Kidney (tissue), 22 donors: ENCODE measurements at regions of chr17 and their contacts with region 1.

Region 1: GRCh38 chr17:73247726-73248125 is 14.0 kb downstream of the CPSF4L start:
- DNase-seq: no peak
- H3K4me3 ChIP-seq: no peak overlapping the region
- H3K27ac ChIP-seq: no peak overlapping the region
- H3K4me1 ChIP-seq: no peaks in the 10 kb centered on the region
- H3K27me3 ChIP-seq: no peaks in the 10 kb centered on the region
- CTCF ChIP-seq: peak; percentile 7

Region 2: GRCh38 chr17:72725433-72726068 is 522.2 kb before region 1 on chr17:
- intact Hi-C with region 1: no loop called
- DNase-seq: peak in 4 of 5 donors; percentile 69 to 80 (median 76)
- H3K4me3 ChIP-seq: no peak overlapping the region
- H3K27ac ChIP-seq: no peak overlapping the region
- H3K4me1 ChIP-seq: no peaks in the 10 kb centered on the region
- H3K27me3 ChIP-seq: no peaks in the 10 kb centered on the region
- CTCF ChIP-seq: peak; percentile 90

Region 3: GRCh38 chr17:73192894-73193701 is 54.6 kb before region 1 on chr17 and contains the start of gene COG1:
- intact Hi-C with region 1: loop called (anchors 10 kb)
- DNase-seq: peak; percentile 88 to 97 (median 92)
- H3K4me3 ChIP-seq: peak within 1 kb of the TSS; percentile 76 to 84 (median 84)
- H3K27ac ChIP-seq: peak within 1 kb of the TSS; percentile 81 to 88
- H3K4me1 ChIP-seq: peaks cover 0 to 5% (median 4%) of the 10 kb centered on the region in 3 donors
- H3K27me3 ChIP-seq: no peaks in the 10 kb centered on the region
- CTCF ChIP-seq: no peak
- total RNA-seq, gene COG1: 41.6 TPM

Region 4: DNA sequence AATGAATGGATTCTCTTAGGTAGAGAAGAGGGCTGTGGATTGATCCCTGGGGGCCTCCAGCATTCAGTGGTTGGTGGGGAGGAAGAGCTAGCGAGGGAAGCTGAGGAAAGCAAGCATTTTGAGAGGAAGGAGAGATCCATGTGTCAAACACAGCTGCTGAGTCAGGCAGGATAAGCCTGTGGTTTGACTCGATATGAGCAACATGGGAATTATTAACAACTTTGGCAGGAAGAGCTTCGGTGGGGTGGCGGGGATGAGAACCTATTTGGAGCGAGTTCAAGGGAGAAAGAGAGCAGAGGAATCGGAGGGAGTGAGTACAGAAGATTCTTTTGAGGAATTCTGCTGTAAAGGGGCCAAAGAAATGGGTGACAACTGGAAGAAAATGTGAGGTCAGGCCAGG is 123.6 kb after region 1 on chr17:
- intact Hi-C with region 1: loop called (anchors 5 kb)
- DNase-seq: no peak
- H3K4me3 ChIP-seq: no peak overlapping the region
- H3K27ac ChIP-seq: no peak overlapping the region
- H3K4me1 ChIP-seq: no peaks in the 10 kb centered on the region
- H3K27me3 ChIP-seq: no peaks in the 10 kb centered on the region
- CTCF ChIP-seq: no peak